CD4-positive, alpha-beta memory T cell (primary cell): ENCODE measurements at regions of chr5 and their contacts with region 1.

Region 1: DNA sequence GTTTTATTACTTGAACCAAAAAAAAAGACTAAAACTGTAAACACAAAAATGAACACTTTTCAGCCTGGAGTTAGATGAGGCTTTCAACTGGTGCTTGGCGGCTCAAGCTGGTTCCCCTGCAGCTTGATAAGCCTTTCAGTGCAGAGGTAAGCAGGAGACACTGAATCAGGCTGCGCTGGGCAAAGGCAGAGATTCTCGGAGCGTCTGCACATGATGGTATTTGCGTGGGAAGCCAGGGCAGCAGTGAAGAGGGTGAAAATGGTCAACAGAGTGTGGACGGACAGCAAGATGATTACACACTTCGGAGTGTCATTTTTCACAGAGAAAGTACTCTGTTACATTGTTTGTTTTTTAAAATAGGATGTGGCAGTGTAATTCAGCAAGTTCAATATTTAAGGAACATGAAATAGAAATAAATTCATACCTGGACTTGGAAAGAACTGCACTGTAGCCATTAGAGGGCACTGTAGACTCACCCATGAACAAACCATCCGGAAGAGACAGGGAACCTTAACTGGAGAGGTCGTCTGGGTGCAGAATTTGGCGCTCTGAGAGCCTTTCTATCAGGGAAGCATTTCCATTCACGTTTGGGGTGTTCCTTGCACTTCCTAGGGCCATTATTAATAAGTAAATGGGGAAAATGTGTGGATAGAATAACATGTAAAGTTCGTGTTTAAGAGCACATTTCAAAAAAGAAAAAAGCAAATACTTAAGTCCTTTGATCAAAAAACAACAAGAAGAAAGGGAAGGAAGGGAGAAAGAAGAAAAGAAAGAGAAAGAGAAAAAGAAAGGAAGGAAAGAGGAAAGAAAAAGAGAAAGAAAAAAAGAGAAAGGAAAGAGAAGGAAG is 69.8 kb downstream of the ICE1 start:
- DNase-seq: peak; percentile 56 to 67 (median 60)
- H3K4me3 ChIP-seq: no peak overlapping the region
- H3K4me3 Mint-ChIP-seq: peak overlapping the region in 7 of 8 donors; percentile 71 to 79 (median 75)
- H3K27ac ChIP-seq: no peak overlapping the region
- H3K27ac Mint-ChIP-seq: peak overlapping the region in 4 of 7 donors; percentile 61 to 93 (median 80)
- H3K4me1 ChIP-seq: peaks cover 19% of the 10 kb centered on the region
- H3K4me1 Mint-ChIP-seq: peaks cover 14 to 34% (median 25%) of the 10 kb centered on the region in 4 donors
- H3K27me3 ChIP-seq: no peaks in the 10 kb centered on the region
- H3K27me3 Mint-ChIP-seq: peaks cover 0 to 6% of the 10 kb centered on the region in 2 donors

Region 2: DNA sequence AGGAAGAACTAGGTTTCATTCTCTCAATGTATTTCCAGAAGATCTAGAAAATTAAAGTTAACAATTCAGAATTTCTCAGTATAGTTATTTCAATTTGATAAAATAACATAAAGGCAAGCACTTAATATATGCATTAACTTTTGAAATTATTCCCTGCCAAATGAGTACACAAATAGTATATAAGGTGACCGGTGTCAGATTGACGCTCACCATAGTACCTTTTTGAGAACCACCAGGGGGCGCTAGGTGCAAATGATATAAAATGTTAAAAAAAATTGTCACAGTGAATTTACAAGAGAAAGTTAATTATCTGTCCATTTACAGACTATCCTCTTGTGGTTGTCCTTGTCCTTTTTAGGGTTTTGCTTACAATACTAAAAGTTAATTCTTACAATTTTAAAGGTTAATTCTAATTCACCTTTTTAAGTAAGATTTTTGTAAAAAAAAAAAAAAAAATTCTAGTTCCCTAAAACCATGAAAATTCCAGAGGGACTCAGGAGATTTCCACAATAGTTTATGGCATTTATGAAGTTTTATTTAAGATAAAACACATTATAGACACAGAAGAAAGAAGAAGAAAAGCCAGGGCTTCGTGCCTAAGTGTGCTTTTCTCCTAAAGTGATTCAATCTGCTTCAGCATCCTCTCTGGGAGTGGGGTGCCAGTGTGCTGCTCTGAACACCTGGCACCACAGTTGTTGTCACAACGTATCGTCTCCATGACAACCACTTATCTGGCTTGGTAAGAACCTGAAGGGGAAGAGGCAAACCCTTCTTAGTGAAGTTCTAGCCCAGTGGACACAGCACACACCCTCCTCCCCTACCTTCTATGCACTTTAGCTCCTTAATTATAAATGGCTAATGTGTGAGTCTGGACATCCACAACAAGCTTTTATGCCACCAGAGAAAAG is 350.4 kb before region 1 on chr5:
- CTCF ChIA-PET with region 1: no interaction called
- POLR2A ChIA-PET with region 1: no interaction called
- intact Hi-C with region 1: loop called (anchors 5 kb)
- DNase-seq: peak in 4 of 5 donors; percentile 34 to 47 (median 39)
- H3K4me3 ChIP-seq: no peak overlapping the region
- H3K4me3 Mint-ChIP-seq: no peak overlapping the region
- H3K27ac ChIP-seq: no peak overlapping the region
- H3K27ac Mint-ChIP-seq: peak overlapping the region in 1 of 7 donors; percentile 56
- H3K4me1 ChIP-seq: peaks cover 11% of the 10 kb centered on the region
- H3K4me1 Mint-ChIP-seq: peaks cover 0 to 14% (median 6%) of the 10 kb centered on the region in 4 donors
- H3K27me3 ChIP-seq: no peaks in the 10 kb centered on the region
- H3K27me3 Mint-ChIP-seq: peaks cover 21 to 26% of the 10 kb centered on the region in 2 donors

Region 3: DNA sequence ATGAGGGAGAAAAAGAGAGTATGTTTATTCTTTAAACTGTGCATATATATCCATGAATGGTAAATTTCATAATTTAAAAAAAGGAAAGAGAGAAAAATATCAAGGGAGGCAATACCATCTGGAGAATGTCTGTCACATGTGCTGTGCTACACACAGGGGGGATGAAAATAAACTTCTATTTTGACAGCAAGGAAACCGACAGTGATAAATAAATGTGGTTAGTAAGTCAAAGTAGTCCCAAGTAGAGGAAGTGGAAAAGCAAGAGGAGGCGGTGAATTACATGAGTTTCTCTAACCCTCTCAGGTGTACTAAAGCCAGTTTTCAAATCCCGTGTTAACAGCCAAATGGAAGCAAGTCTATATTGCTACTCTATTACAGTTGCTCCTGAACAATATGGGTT is 13.5 kb after region 1 on chr5:
- CTCF ChIA-PET with region 1: no interaction called
- POLR2A ChIA-PET with region 1: no interaction called
- intact Hi-C with region 1: no loop called
- DNase-seq: no peak
- H3K4me3 ChIP-seq: no peak overlapping the region
- H3K4me3 Mint-ChIP-seq: no peak overlapping the region
- H3K27ac ChIP-seq: no peak overlapping the region
- H3K27ac Mint-ChIP-seq: no peak overlapping the region
- H3K4me1 ChIP-seq: no peaks in the 10 kb centered on the region
- H3K4me1 Mint-ChIP-seq: no peaks in the 10 kb centered on the region
- H3K27me3 ChIP-seq: peaks cover 4% of the 10 kb centered on the region
- H3K27me3 Mint-ChIP-seq: peaks cover 26 to 29% of the 10 kb centered on the region in 2 donors

Region 4: GRCh38 chr5:6377905-6378765 is 885.8 kb after region 1 on chr5 and contains the start of gene MED10:
- CTCF ChIA-PET with region 1: no interaction called
- POLR2A ChIA-PET with region 1: interaction called, 5 read pairs
- intact Hi-C with region 1: loop called (anchors 1 kb)
- DNase-seq: peak; percentile 91 to 95 (median 92)
- H3K4me3 ChIP-seq: peak within 1 kb of the TSS; percentile 89 to 90
- H3K4me3 Mint-ChIP-seq: peak within 1 kb of the TSS; percentile 96 to 100 (median 99)
- H3K27ac ChIP-seq: peak within 1 kb of the TSS; percentile 86
- H3K27ac Mint-ChIP-seq: peak within 1 kb of the TSS; percentile 95 to 100 (median 98)
- H3K4me1 ChIP-seq: peaks cover 34% of the 10 kb centered on the region
- H3K4me1 Mint-ChIP-seq: peaks cover 35 to 62% (median 49%) of the 10 kb centered on the region in 4 donors
- H3K27me3 ChIP-seq: no peaks in the 10 kb centered on the region
- H3K27me3 Mint-ChIP-seq: no peaks in the 10 kb centered on the region
- total RNA-seq, gene MED10: 61.2 to 64.7 TPM

Region 5: GRCh38 chr5:6632917-6633468 is 1140.7 kb after region 1 on chr5 and contains the starts of genes NSUN2 and SRD5A1:
- CTCF ChIA-PET with region 1: no interaction called
- POLR2A ChIA-PET with region 1: no interaction called
- intact Hi-C with region 1: loop called (anchors 1 kb)
- DNase-seq: peak; percentile 92 to 98 (median 95)
- H3K4me3 ChIP-seq: peak within 1 kb of the TSS; percentile 66 to 94
- H3K4me3 Mint-ChIP-seq: peak within 1 kb of the TSS; percentile 84 to 99 (median 93)
- H3K27ac ChIP-seq: peak within 1 kb of the TSS; percentile 87
- H3K27ac Mint-ChIP-seq: peak within 1 kb of the TSS; percentile 92 to 99 (median 99)
- H3K4me1 ChIP-seq: peaks cover 36% of the 10 kb centered on the region
- H3K4me1 Mint-ChIP-seq: peaks cover 30 to 60% (median 39%) of the 10 kb centered on the region in 4 donors
- H3K27me3 ChIP-seq: no peaks in the 10 kb centered on the region
- H3K27me3 Mint-ChIP-seq: no peaks in the 10 kb centered on the region
- total RNA-seq, gene NSUN2: 78.0 to 81.6 TPM
- total RNA-seq, gene SRD5A1: 7.8 to 9.2 TPM

Region 6: GRCh38 chr5:6837519-6838110 is 1345.3 kb after region 1 on chr5:
- CTCF ChIA-PET with region 1: no interaction called
- POLR2A ChIA-PET with region 1: no interaction called
- intact Hi-C with region 1: loop called (anchors 5 kb)
- DNase-seq: peak in 1 of 5 donors; percentile 20
- H3K4me3 ChIP-seq: no peak overlapping the region
- H3K4me3 Mint-ChIP-seq: no peak overlapping the region
- H3K27ac ChIP-seq: no peak overlapping the region
- H3K27ac Mint-ChIP-seq: no peak overlapping the region
- H3K4me1 ChIP-seq: peaks cover 9% of the 10 kb centered on the region
- H3K4me1 Mint-ChIP-seq: peaks cover 0 to 3% (median under 1%) of the 10 kb centered on the region in 4 donors
- H3K27me3 ChIP-seq: no peaks in the 10 kb centered on the region
- H3K27me3 Mint-ChIP-seq: peaks cover 0 to 8% of the 10 kb centered on the region in 2 donors